MCF 10A (cell line): ENCODE measurements at regions of chr17 and their contacts with region 1.

Region 1: DNA sequence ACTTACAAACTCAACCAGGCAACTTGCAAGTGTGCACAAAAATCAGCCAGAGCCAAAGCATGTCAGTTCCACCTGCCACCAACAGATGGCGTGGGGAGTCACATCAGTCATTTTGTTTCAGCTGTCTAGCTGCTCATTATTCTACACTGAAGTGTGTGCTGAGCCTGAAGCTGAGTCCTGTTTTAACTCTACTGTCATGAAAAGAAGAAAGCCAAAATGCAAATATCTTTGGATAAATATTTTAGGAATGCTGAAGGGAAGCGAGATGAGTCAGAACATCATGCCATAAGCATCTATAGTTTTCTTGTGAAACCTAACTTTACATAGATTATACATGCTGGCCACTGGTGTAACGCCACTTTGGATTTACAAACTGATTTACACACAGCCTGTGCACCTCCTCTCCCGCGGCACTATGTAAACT is 172.6 kb downstream of the CDK5R1 start:
- DNase-seq: peak; percentile 69
- H3K4me3 Mint-ChIP-seq: no peak overlapping the region
- H3K27ac Mint-ChIP-seq: no peak overlapping the region
- H3K4me1 Mint-ChIP-seq: no peaks in the 10 kb centered on the region
- H3K27me3 Mint-ChIP-seq: no peaks in the 10 kb centered on the region
- CTCF ChIP-seq: peak; percentile 93

Region 2: GRCh38 chr17:32341857-32342602 is 317.4 kb before region 1 on chr17 and contains the start of gene C17orf75:
- CTCF ChIA-PET with region 1: no interaction called
- POLR2A ChIA-PET with region 1: no interaction called
- intact Hi-C with region 1: no loop called
- DNase-seq: peak; percentile 76
- H3K4me3 Mint-ChIP-seq: peak within 1 kb of the TSS; percentile 98
- H3K27ac Mint-ChIP-seq: peak within 1 kb of the TSS; percentile 93
- H3K4me1 Mint-ChIP-seq: peaks cover 10% of the 10 kb centered on the region
- H3K27me3 Mint-ChIP-seq: no peaks in the 10 kb centered on the region
- CTCF ChIP-seq: no peak
- total RNA-seq, gene C17orf75: 11.5 and 18.1 TPM in 2 replicates

Region 3: DNA sequence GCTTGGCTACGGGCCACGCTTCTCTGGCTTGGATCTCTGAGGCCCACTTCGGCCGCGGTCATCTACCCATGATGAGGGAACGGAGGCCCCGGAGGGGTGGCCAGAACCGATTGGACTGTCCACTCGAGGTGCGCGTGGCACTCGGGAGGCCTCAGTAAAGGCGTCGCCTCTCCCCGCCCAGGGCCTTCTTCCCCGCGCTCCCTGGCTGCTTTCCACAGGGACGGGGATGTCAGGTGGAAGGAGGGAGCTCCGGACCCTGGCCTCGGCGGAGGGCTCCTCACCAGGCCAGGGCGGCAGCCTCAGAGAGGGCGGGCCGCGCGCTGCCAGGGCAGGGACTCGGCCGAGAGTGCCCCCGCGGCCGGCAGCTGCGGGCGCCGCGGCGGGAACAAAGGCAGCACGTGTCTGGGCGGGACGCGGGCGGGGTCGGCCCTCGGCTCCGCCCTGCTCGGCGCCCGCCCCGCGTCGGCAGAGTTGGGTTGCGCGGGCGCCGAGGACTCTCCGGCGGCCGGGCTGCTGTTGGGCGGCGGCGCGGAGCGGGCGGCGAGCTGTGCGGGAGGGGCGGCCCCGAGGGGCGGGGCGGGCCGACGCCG is 173.2 kb before region 1 on chr17:
- CTCF ChIA-PET with region 1: interaction called, 16 read pairs
- POLR2A ChIA-PET with region 1: no interaction called
- intact Hi-C with region 1: no loop called
- DNase-seq: peak; percentile 75
- H3K4me3 Mint-ChIP-seq: peak overlapping the region; percentile 80
- H3K27ac Mint-ChIP-seq: no peak overlapping the region
- H3K4me1 Mint-ChIP-seq: peaks cover 20% of the 10 kb centered on the region
- H3K27me3 Mint-ChIP-seq: no peaks in the 10 kb centered on the region
- CTCF ChIP-seq: no peak

Region 4: GRCh38 chr17:32648450-32648849 is 11.0 kb before region 1 on chr17:
- CTCF ChIA-PET with region 1: interaction called, 17 read pairs
- POLR2A ChIA-PET with region 1: interaction called, 3 read pairs
- intact Hi-C with region 1: no loop called
- DNase-seq: no peak
- H3K4me3 Mint-ChIP-seq: no peak overlapping the region
- H3K27ac Mint-ChIP-seq: no peak overlapping the region
- H3K4me1 Mint-ChIP-seq: no peaks in the 10 kb centered on the region
- H3K27me3 Mint-ChIP-seq: no peaks in the 10 kb centered on the region
- CTCF ChIP-seq: no peak

Region 5: DNA sequence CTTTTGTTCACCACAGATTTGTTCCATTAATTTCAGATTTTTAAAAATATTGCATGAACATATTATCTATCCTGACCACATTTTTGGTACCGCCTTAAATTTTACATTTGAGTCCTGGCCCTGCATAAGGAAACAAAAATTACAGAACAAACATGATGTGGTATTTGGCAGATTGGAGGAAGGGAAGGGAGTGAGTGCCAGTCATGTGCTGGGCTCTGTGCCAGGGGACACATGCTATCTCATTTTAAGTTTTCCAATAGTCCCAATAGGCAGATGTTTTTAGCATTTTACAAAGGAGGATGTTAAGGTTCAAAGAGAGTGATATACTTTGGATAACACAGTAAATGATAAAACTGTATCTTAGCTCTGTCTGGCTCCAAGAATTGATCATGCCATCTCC is 12.5 kb after region 1 on chr17:
- CTCF ChIA-PET with region 1: interaction called, 15 read pairs
- POLR2A ChIA-PET with region 1: no interaction called
- intact Hi-C with region 1: no loop called
- DNase-seq: peak; percentile 13
- H3K4me3 Mint-ChIP-seq: no peak overlapping the region
- H3K27ac Mint-ChIP-seq: no peak overlapping the region
- H3K4me1 Mint-ChIP-seq: no peaks in the 10 kb centered on the region
- H3K27me3 Mint-ChIP-seq: no peaks in the 10 kb centered on the region
- CTCF ChIP-seq: no peak

Region 6: GRCh38 chr17:32769839-32770238 is 110.4 kb after region 1 on chr17:
- CTCF ChIA-PET with region 1: interaction called, 33 read pairs
- POLR2A ChIA-PET with region 1: no interaction called
- intact Hi-C with region 1: no loop called
- DNase-seq: peak; percentile 71
- H3K4me3 Mint-ChIP-seq: no peak overlapping the region
- H3K27ac Mint-ChIP-seq: no peak overlapping the region
- H3K4me1 Mint-ChIP-seq: no peaks in the 10 kb centered on the region
- H3K27me3 Mint-ChIP-seq: no peaks in the 10 kb centered on the region
- CTCF ChIP-seq: peak; percentile 49